Common myeloid progenitor, CD34-positive (primary cell): ENCODE measurements at regions of chr9 and their contacts with region 1.

Region 1: DNA sequence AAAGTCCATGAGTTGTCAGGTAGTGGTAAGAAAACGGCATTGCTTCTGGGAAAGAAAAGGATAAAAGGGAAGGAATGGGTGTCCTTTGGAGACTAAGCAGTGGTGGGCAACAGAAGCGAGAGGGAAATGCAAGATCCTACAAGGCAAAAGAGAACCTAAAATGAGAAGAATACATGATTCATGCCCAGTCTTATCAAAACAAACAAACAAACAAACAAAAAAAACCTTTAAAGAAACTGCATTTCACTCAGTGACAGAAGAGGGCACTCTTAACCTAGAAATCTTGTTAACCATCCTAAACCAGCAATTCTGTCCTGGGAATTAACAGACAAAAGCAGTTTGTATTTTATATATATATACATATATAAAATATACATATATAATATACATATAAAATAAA is 88.5 kb downstream of the SUSD1 start:
- DNase-seq: peak; percentile 26 to 49 (median 40)
- H3K4me3 ChIP-seq: no peak overlapping the region
- H3K27ac ChIP-seq: no peak overlapping the region
- H3K4me1 ChIP-seq: no peaks in the 10 kb centered on the region
- H3K27me3 ChIP-seq: no peaks in the 10 kb centered on the region

Region 2: GRCh38 chr9:112074250-112075008 is 12.2 kb before region 1 on chr9:
- CTCF ChIA-PET with region 1: interaction called, 15 read pairs
- POLR2A ChIA-PET with region 1: no interaction called
- DNase-seq: peak; percentile 56 to 69 (median 66)
- H3K4me3 ChIP-seq: no peak overlapping the region
- H3K27ac ChIP-seq: no peak overlapping the region
- H3K4me1 ChIP-seq: peaks cover 0 to 7% (median 0%) of the 10 kb centered on the region in 4 experiments
- H3K27me3 ChIP-seq: no peaks in the 10 kb centered on the region

Region 3: GRCh38 chr9:112097712-112098688 is 11.4 kb after region 1 on chr9:
- CTCF ChIA-PET with region 1: interaction called, 11 read pairs
- POLR2A ChIA-PET with region 1: no interaction called
- DNase-seq: peak; percentile 80 to 91 (median 84)
- H3K4me3 ChIP-seq: no peak overlapping the region
- H3K27ac ChIP-seq: no peak overlapping the region
- H3K4me1 ChIP-seq: peaks cover 0 to 26% (median 2%) of the 10 kb centered on the region in 4 experiments
- H3K27me3 ChIP-seq: no peaks in the 10 kb centered on the region